ENCODE measurements at regions of chr6 and their contacts with region 1.

Region 1: GRCh38 chr6:34805050-34805449 is 13.2 kb downstream of the BLTP3A start:
- DNase-seq: no peak
- H3K4me3 ChIP-seq: no peak overlapping the region
- H3K27ac ChIP-seq: no peak overlapping the region
- H3K4me1 ChIP-seq: no peaks in the 10 kb centered on the region
- H3K27me3 ChIP-seq: no peaks in the 10 kb centered on the region
- CTCF ChIP-seq: no peak

Region 2: GRCh38 chr6:34132486-34133185 is 672.4 kb before region 1 on chr6:
- CTCF ChIA-PET with region 1: no interaction called
- POLR2A ChIA-PET with region 1: no interaction called
- intact Hi-C with region 1: no loop called
- DNase-seq: peak; percentile 65
- H3K4me3 ChIP-seq: no peak overlapping the region
- H3K27ac ChIP-seq: no peak overlapping the region
- H3K4me1 ChIP-seq: no peaks in the 10 kb centered on the region
- H3K27me3 ChIP-seq: peaks cover 7% of the 10 kb centered on the region
- CTCF ChIP-seq: no peak

Region 3: DNA sequence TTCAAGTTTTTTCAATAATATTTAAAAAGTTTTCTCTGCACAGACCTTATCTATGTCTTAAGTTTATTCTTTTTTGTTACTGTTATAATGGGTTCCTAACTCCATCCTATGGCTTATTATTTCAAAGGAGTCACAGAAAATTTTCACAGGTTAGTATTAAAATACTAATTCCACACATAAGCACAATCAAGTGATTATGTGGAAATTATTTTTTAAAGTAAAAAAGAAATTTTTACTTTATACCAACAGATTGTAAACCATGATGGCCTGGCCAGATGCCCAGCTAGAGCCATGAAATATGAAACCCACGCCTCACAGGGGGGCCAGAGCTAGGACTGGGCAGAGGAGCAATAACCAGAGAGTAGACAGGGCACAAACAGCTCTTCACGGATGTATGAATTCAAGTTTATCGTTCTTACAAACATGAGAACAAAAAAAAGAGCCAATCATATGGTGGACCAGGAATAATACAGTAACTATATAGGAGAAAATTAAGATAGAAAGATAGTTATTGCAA is 446.6 kb before region 1 on chr6:
- CTCF ChIA-PET with region 1: no interaction called
- POLR2A ChIA-PET with region 1: no interaction called
- intact Hi-C with region 1: no loop called
- DNase-seq: peak; percentile 73
- H3K4me3 ChIP-seq: no peak overlapping the region
- H3K27ac ChIP-seq: peak overlapping the region; percentile 29
- H3K4me1 ChIP-seq: peaks cover 23% of the 10 kb centered on the region
- H3K27me3 ChIP-seq: no peaks in the 10 kb centered on the region
- CTCF ChIP-seq: no peak

Region 4: GRCh38 chr6:34656378-34657036 is 148.5 kb before region 1 on chr6:
- CTCF ChIA-PET with region 1: no interaction called
- POLR2A ChIA-PET with region 1: interaction called, 20 read pairs
- intact Hi-C with region 1: no loop called
- DNase-seq: peak; percentile 81
- H3K4me3 ChIP-seq: peak overlapping the region; percentile 36
- H3K27ac ChIP-seq: peak overlapping the region; percentile 95
- H3K4me1 ChIP-seq: peaks cover 37% of the 10 kb centered on the region
- H3K27me3 ChIP-seq: no peaks in the 10 kb centered on the region
- CTCF ChIP-seq: no peak

Region 5: DNA sequence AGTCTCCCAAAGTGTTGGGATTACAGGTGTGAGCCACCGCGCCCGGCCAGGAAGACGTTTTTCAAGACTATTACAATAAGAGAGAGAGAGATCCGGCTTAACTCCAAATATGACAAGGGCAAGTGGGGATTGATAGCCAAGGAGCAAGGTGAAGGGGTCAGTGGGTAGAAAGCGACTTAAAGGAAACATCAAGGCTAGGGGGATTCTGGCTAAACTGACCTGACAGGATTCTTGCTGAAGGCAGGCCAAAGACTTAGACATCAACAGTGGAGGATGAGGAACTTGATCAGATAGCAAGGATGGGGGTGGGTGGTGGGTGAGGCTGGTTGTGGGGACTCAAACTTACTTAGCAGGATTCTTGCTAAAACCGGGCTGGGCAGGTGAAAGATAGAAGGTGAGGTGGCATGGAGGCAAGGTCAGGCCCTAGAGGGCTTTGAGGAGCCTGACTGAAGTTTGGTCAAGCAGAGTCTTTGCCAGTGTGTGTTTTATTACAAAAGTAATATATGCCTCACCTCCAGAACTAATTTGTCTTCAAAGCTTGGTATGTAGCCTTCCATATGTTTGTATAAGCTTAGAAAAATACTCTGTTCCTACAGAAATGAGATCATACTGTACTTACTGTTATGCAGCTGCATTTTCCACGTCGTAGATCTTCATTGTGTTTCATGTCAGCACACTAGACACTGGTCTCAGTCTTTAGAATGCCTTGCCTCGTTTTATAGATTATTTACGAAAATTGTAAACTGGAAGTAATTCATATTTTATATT is 145.6 kb after region 1 on chr6:
- CTCF ChIA-PET with region 1: no interaction called
- POLR2A ChIA-PET with region 1: no interaction called
- intact Hi-C with region 1: no loop called
- DNase-seq: peak; percentile 23
- H3K4me3 ChIP-seq: no peak overlapping the region
- H3K27ac ChIP-seq: no peak overlapping the region
- H3K4me1 ChIP-seq: peaks cover 36% of the 10 kb centered on the region
- H3K27me3 ChIP-seq: no peaks in the 10 kb centered on the region
- CTCF ChIP-seq: no peak